Activated naive CD4-positive, alpha-beta T cell treated with anti-CD3 and anti-CD28 coated beads for 36 hours (primary cell): ENCODE measurements at regions of chr3 and their contacts with region 1.

Region 1: GRCh38 chr3:14178247-14179113 is at the starts of genes LSM3 and XPC:
- DNase-seq: peak; percentile 97
- H3K4me3 Mint-ChIP-seq: peak within 1 kb of the TSS; percentile 96
- H3K27ac Mint-ChIP-seq: peak within 1 kb of the TSS; percentile 98
- H3K4me1 Mint-ChIP-seq: peaks cover 63% of the 10 kb centered on the region
- H3K27me3 Mint-ChIP-seq: no peaks in the 10 kb centered on the region
- total RNA-seq, gene LSM3: 26.1 to 26.2 TPM
- total RNA-seq, gene XPC: 39.0 to 39.8 TPM

Region 2: DNA sequence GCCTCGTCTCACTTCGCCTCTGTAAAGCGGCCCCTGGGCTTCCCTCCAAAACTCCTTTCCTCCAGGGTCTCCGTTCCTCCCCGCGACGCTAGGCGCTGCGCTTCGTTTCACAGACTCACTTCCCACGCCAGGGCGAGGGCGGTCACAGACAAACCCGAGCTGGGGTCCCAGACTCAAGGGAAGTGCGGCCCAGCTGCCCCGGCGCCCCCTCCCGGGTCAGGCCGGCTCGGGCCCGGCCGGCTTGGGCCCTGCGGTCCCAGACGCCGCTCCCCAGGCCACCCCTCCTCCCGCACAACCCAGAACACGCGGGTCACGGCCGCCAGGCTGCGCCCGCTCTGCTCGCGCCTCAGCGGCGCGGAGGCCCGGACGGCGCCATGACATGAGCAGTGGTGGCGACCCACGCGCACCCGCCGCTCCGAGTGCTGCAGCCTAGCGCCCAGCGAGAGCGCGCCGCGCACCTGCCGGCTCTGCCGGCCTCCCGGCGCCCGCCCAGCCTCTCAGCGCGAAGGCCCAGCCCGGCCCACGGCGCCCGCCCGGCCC is 758.9 kb before region 1 on chr3:
- CTCF ChIA-PET with region 1: no interaction called
- intact Hi-C with region 1: loop called (anchors 5 kb)
- DNase-seq: peak; percentile 52
- H3K4me3 Mint-ChIP-seq: peak overlapping the region; percentile 92
- H3K27ac Mint-ChIP-seq: peak overlapping the region; percentile 93
- H3K4me1 Mint-ChIP-seq: peaks cover 70% of the 10 kb centered on the region
- H3K27me3 Mint-ChIP-seq: no peaks in the 10 kb centered on the region

Region 3: DNA sequence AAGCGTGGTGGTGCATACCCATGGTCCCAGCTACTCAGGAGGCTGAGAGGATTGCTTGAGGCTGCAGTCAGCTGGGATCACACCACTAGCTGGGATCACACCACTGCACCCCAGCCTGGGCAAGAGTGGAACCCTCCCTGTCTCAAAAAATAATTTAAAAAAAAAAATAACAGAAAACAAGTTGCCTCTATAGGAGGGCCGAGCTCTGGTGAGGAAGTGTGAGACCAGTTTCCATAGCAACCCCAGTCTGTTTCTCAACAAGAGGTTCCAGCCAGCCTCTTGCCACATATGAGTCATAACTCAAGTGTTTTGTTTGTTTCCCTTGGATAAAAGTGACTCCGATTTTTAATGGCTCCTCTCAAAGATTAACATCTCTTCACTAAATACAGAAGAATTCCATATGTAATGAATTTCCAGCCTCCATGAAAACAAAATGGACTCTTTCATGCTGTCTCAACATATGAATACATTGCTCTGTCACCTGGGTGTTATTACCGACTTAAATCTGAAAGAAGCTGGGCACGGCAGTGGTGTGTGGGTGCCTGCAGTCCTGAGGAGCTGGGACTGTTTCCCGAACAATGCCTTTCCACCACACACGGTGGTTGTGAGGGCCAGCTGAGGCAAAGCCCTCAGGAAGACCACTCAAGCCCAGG is 33.9 kb before region 1 on chr3:
- CTCF ChIA-PET with region 1: no interaction called
- intact Hi-C with region 1: loop called (anchors 1 kb)
- DNase-seq: peak; percentile 70
- H3K4me3 Mint-ChIP-seq: peak overlapping the region; percentile 19
- H3K27ac Mint-ChIP-seq: peak overlapping the region; percentile 81
- H3K4me1 Mint-ChIP-seq: peaks cover 48% of the 10 kb centered on the region
- H3K27me3 Mint-ChIP-seq: no peaks in the 10 kb centered on the region

Region 4: DNA sequence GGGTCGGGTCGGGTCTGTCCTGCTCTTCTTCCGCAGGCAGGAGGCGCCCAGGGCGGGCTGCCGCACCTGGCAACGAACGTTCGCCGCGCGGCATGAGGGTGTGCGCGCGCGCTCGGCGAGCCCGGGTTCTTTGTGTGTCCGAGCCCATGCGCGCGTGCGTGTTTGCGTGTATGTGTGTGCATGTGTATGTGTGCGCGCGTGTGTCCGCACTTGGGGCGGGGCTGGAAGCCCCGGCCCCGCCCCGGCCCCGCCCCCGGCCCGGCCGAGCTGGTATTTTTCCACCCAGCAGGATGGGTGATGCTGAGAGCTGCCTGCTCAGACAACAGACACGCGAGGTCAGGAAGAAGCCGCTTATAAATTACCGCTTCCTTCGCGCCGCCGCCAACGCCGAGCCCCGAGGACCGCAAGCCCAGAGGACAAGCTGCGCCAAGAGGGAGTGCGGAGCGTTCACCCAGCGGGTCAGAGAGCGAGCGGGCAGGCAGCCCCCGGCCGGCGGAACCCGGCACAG is 223.9 kb after region 1 on chr3 and contains the start of gene SLC6A6:
- CTCF ChIA-PET with region 1: no interaction called
- intact Hi-C with region 1: loop called (anchors 1 kb)
- DNase-seq: peak; percentile 91
- H3K4me3 Mint-ChIP-seq: peak within 1 kb of the TSS; percentile 96
- H3K27ac Mint-ChIP-seq: peak within 1 kb of the TSS; percentile 91
- H3K4me1 Mint-ChIP-seq: peaks cover 32% of the 10 kb centered on the region
- H3K27me3 Mint-ChIP-seq: no peaks in the 10 kb centered on the region
- total RNA-seq, gene SLC6A6: 32.2 to 36.9 TPM

Region 5: GRCh38 chr3:14431892-14432834 is 253.7 kb after region 1 on chr3:
- CTCF ChIA-PET with region 1: no interaction called
- intact Hi-C with region 1: loop called (anchors 1 kb)
- DNase-seq: peak; percentile 98
- H3K4me3 Mint-ChIP-seq: peak overlapping the region; percentile 66
- H3K27ac Mint-ChIP-seq: peak overlapping the region; percentile 94
- H3K4me1 Mint-ChIP-seq: peaks cover 76% of the 10 kb centered on the region
- H3K27me3 Mint-ChIP-seq: no peaks in the 10 kb centered on the region

Region 6: GRCh38 chr3:14525685-14526631 is 347.5 kb after region 1 on chr3:
- CTCF ChIA-PET with region 1: no interaction called
- intact Hi-C with region 1: no loop called
- DNase-seq: no peak
- H3K4me3 Mint-ChIP-seq: no peak overlapping the region
- H3K27ac Mint-ChIP-seq: no peak overlapping the region
- H3K4me1 Mint-ChIP-seq: no peaks in the 10 kb centered on the region
- H3K27me3 Mint-ChIP-seq: peaks cover 5% of the 10 kb centered on the region

Region 7: DNA sequence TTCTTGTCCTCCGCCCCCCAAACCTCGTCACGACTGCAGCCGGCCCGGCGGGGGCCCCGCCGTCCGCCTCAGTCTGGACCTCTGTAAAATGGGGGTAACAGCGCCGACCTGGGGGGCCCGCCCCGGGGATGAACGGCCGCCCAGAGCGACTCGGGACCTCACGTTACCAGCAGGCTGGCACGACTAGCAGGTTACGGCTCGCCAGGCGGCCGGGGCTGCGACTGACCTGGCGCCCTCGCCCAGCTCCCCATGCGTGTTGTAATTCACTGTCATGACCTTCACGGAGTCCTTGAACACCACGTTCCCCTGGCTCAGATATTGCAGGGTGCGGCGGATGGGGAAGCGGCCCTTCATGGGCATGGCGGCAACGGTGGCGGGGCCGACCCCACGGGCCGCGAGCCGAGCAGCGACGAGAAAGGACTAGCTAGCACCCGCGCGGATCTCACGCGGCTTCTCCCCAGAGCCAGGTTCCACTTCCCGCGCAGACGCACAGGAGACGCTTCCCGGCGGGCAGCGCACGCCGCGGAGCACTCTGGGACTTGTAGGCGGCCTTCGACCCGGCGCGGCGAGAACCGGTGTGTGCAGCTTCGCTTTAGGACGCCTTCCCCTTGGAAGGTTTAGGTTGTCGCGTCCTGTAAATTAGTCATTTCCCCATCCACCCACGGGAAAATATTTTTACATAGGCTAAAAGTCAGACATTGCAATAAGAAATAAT is 886.5 kb after region 1 on chr3 and contains the start of gene MRPS25:
- CTCF ChIA-PET with region 1: no interaction called
- intact Hi-C with region 1: loop called (anchors 5 kb)
- DNase-seq: peak; percentile 93
- H3K4me3 Mint-ChIP-seq: peak within 1 kb of the TSS; percentile 96
- H3K27ac Mint-ChIP-seq: peak within 1 kb of the TSS; percentile 87
- H3K4me1 Mint-ChIP-seq: peaks cover 25% of the 10 kb centered on the region
- H3K27me3 Mint-ChIP-seq: no peaks in the 10 kb centered on the region
- total RNA-seq, gene MRPS25: 55.0 to 57.5 TPM